Activated CD4-positive, alpha-beta memory T cell treated with anti-CD3 and anti-CD28 coated beads for 36 hours (primary cell): ENCODE measurements at regions of chr5 and their contacts with region 1.

Region 1: GRCh38 chr5:152532714-152533113 is 127.6 kb upstream of the NMUR2 start:
- DNase-seq: no peak
- H3K4me3 Mint-ChIP-seq: no peak overlapping the region
- H3K27ac Mint-ChIP-seq: no peak overlapping the region
- H3K4me1 Mint-ChIP-seq: peaks cover 5% of the 10 kb centered on the region
- H3K27me3 Mint-ChIP-seq: no peaks in the 10 kb centered on the region

Region 2: GRCh38 chr5:152389208-152389849 is 143.4 kb before region 1 on chr5:
- CTCF ChIA-PET with region 1: no interaction called
- POLR2A ChIA-PET with region 1: no interaction called
- intact Hi-C with region 1: no loop called
- DNase-seq: no peak
- H3K4me3 Mint-ChIP-seq: no peak overlapping the region
- H3K27ac Mint-ChIP-seq: no peak overlapping the region
- H3K4me1 Mint-ChIP-seq: no peaks in the 10 kb centered on the region
- H3K27me3 Mint-ChIP-seq: no peaks in the 10 kb centered on the region

Region 3: GRCh38 chr5:152593407-152593932 is 60.8 kb after region 1 on chr5:
- CTCF ChIA-PET with region 1: no interaction called
- POLR2A ChIA-PET with region 1: no interaction called
- intact Hi-C with region 1: no loop called
- DNase-seq: no peak
- H3K4me3 Mint-ChIP-seq: no peak overlapping the region
- H3K27ac Mint-ChIP-seq: no peak overlapping the region
- H3K4me1 Mint-ChIP-seq: no peaks in the 10 kb centered on the region
- H3K27me3 Mint-ChIP-seq: no peaks in the 10 kb centered on the region

Region 4: DNA sequence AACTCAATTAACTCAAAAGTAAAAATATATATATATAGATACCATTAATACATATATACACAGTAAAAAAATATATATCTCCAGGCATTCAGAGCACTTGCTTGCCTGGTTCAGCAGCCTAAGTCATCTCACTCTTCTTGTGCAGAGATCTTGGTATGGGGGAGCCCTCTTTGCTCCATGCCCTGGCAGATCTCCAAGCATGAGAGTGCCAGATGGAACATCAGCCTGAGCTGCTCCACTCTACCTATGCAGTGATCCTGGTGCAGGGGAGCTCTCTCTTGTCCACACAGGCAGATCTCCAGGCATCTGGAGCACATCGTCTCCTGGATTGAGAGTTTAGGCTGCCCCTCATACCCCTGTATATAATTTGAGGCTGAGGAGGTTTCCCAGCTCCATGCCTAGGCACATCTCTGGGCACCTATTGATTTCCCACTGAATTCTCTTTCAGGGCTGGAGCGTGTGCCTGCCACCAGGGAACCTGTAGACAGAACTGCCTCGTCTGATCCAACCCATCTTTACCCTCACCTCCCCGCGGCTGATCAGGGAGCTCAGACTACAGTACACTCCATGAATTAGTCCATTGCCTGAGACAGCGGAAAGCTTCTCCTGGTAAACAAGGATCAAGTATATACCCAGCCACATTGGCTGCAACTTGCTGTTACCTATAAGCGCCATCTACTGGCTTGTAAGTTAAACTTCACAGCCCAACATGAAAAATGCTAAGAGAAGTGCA is 615.3 kb after region 1 on chr5:
- CTCF ChIA-PET with region 1: interaction called, 4 read pairs
- POLR2A ChIA-PET with region 1: no interaction called
- intact Hi-C with region 1: loop called (anchors 2 kb)
- DNase-seq: no peak
- H3K4me3 Mint-ChIP-seq: no peak overlapping the region
- H3K27ac Mint-ChIP-seq: no peak overlapping the region
- H3K4me1 Mint-ChIP-seq: no peaks in the 10 kb centered on the region
- H3K27me3 Mint-ChIP-seq: no peaks in the 10 kb centered on the region